BJ (cell line): ENCODE measurements at regions of chr3 and their contacts with region 1.

Region 1: GRCh38 chr3:111277226-111277625 is 205.6 kb downstream of the NECTIN3 start:
- DNase-seq: no peak
- H3K4me3 ChIP-seq: no peak overlapping the region
- H3K27me3 ChIP-seq: no peaks in the 10 kb centered on the region
- CTCF ChIP-seq: peak; percentile 37

Region 2: DNA sequence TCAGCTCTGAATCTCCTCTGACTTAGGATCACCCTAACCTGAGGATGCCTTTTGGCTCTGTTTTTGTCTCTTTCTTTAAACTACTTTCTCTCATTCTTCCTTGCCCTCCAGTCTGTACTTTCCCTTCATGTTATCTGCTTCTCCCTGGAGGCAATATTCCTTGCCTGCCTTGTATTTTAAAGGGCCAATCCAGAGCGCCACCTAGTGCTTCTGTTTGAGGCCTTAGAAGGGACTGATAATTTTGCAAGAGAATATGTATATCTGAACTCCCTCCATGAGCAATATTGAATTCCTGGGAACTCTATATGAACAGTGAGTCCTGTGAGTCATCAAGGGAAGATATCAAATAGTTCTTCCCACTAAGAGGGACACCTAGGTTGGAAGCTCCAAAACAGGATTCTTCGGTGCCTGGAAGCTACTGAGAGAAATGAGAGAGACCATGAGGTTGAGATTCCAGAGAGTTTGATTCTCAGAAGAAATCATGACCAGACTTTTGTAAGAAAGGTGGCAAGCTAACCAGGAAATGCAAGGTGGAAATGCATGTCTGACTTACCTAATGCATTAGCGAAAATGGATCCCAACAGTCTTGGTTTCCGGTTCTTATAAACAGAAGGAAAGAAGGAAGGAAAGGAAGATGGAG is 61.0 kb after region 1 on chr3:
- CTCF ChIA-PET with region 1: interaction called, 17 read pairs
- POLR2A ChIA-PET with region 1: no interaction called
- DNase-seq: no peak
- H3K4me3 ChIP-seq: no peak overlapping the region
- H3K27me3 ChIP-seq: no peaks in the 10 kb centered on the region
- CTCF ChIP-seq: peak; percentile 88